ENCODE measurements at regions of chr1 and their contacts with region 1.

Region 1: DNA sequence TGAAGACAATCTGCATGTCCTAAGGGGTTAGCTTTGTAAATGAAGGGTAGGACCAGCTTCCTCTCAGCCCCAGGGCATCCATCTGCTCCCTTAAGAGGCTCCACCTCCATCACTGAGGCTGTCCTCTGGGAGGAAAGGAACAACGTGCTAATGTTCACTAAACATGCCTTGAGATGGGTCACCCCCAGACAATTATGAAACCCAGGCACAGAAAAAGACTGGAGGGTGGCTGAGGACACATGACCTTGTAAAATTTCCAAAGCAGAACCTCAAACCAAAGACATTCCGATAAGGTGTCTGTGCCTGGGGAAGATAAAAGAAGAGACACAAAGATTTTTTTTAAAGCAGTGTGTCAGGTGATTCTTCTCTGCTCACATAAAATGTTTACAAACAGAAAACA is 37.6 kb upstream of the ZNF124 start:
- DNase-seq: no peak
- H3K4me3 ChIP-seq: no peak overlapping the region
- H3K27ac ChIP-seq: no peak overlapping the region
- H3K4me1 ChIP-seq: no peaks in the 10 kb centered on the region
- H3K27me3 ChIP-seq: no peaks in the 10 kb centered on the region
- CTCF ChIP-seq: no peak

Region 2: GRCh38 chr1:246843876-246844275 is 365.5 kb before region 1 on chr1:
- intact Hi-C with region 1: no loop called
- DNase-seq: no peak
- H3K4me3 ChIP-seq: no peak overlapping the region
- H3K27ac ChIP-seq: no peak overlapping the region
- H3K4me1 ChIP-seq: no peaks in the 10 kb centered on the region
- H3K27me3 ChIP-seq: no peaks in the 10 kb centered on the region
- CTCF ChIP-seq: no peak

Region 3: GRCh38 chr1:247103859-247104591 is 105.4 kb before region 1 on chr1 and contains the start of gene ZNF669:
- intact Hi-C with region 1: loop called (anchors 10 kb)
- DNase-seq: peak; percentile 98
- H3K4me3 ChIP-seq: peak within 1 kb of the TSS; percentile 90
- H3K27ac ChIP-seq: peak within 1 kb of the TSS; percentile 84
- H3K4me1 ChIP-seq: no peaks in the 10 kb centered on the region
- H3K27me3 ChIP-seq: no peaks in the 10 kb centered on the region
- CTCF ChIP-seq: no peak
- total RNA-seq, gene ZNF669: 6.2 to 6.5 TPM

Region 4: DNA sequence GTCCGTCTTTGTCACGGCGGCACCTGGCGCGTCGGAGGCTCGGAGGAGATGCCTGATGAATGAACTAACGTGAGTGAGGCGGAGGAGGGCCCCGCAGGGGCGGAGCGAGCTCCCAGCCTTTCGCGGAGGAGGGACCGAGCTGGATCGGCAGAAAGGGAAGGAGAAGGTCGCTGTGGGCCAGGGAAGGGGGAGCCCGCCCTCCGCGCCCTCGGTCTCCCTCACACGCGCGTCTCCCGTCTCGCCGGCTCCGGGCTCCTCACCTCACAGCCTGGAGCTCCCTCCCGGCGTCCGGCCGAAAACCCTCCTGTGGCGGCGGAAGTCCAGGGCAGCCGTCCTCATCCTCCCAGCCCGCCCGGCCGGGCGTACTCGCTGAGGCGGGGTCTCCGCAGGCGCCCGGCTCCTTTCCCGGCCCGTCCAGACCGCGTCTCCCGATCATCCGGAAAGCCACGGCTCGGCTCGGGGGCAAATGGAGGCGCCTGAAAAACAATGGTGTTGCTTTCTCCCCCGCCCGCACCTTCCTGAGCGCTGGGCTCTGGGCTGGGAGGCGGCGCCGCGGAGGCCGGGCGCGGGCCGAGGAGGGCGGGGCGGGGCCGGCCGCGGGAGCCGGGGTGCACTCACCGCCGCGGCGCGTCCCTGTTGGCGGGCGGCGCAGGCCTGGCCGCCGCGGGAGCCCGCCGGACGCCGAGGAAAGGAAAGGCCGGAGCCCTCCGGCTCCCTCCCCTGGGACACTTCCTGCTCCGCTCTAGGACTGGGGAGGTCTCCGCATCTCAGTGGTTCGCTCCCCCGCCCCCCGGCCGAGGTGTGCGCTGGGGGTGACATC is 122.0 kb after region 1 on chr1 and contains the start of gene ZNF496:
- intact Hi-C with region 1: loop called (anchors 10 kb)
- DNase-seq: peak; percentile 89
- H3K4me3 ChIP-seq: peak within 1 kb of the TSS; percentile 96
- H3K27ac ChIP-seq: peak within 1 kb of the TSS; percentile 91
- H3K4me1 ChIP-seq: peaks cover 16% of the 10 kb centered on the region
- H3K27me3 ChIP-seq: no peaks in the 10 kb centered on the region
- CTCF ChIP-seq: no peak
- total RNA-seq, gene ZNF496: 11.7 to 15.6 TPM